PC-9 (cell line): ENCODE measurements at regions of chr2 and their contacts with region 1.

Region 1: DNA sequence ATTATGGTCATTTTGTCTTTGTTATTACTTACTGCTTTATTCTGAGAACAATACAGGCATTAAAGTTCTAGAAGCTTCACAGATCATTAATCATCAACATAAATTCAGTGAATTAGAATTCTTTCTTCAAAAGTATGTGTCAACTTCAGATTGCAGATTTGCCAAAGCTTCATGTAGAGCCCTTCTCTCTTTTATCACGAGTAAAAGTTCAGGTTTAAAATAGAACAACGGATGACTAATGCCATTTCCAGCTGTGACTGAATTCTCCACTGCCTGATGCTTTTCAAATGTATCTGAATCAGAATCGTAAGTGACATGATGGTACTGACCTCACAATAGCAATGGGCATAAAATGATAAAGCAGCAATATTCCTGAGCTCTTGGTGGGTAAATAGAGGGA is 116.0 kb downstream of the ABCA12 start:
- DNase-seq: no peak
- H3K4me3 ChIP-seq: no peak overlapping the region
- H3K27ac ChIP-seq: no peak overlapping the region
- H3K4me1 ChIP-seq: no peaks in the 10 kb centered on the region
- H3K27me3 ChIP-seq: no peaks in the 10 kb centered on the region
- CTCF ChIP-seq: no peak

Region 2: GRCh38 chr2:214341646-214342045 is 680.8 kb before region 1 on chr2:
- CTCF ChIA-PET with region 1: no interaction called
- POLR2A ChIA-PET with region 1: interaction called, 22 read pairs
- intact Hi-C with region 1: no loop called
- DNase-seq: no peak
- H3K4me3 ChIP-seq: no peak overlapping the region
- H3K27ac ChIP-seq: no peak overlapping the region
- H3K4me1 ChIP-seq: no peaks in the 10 kb centered on the region
- H3K27me3 ChIP-seq: no peaks in the 10 kb centered on the region
- CTCF ChIP-seq: no peak

Region 3: DNA sequence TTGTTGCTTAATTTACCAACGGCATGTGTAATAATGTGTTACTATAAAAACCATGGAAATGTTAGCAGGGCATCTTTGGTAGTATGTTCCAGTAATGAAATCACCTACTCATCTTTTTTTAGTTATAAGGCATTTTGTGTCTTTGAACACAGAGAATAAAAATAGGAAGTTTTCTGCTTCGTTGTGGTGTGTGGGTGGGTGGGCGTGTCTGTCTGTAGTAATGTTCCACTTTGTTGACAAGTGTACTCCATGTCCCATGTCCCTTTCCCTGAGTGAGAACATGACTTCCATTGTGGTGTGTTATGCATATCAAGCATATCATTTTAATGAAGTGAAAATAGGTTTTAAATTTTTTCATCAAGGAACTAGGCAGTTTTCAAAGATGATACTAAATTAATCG is 462.2 kb before region 1 on chr2:
- CTCF ChIA-PET with region 1: no interaction called
- POLR2A ChIA-PET with region 1: no interaction called
- intact Hi-C with region 1: no loop called
- DNase-seq: no peak
- H3K4me3 ChIP-seq: no peak overlapping the region
- H3K27ac ChIP-seq: no peak overlapping the region
- H3K4me1 ChIP-seq: no peaks in the 10 kb centered on the region
- H3K27me3 ChIP-seq: no peaks in the 10 kb centered on the region
- CTCF ChIP-seq: no peak